ENCODE measurements at regions of chr4 and their contacts with region 1.

Region 1: GRCh38 chr4:16916719-16917337 is 18.4 kb upstream of the LDB2 start:
- DNase-seq: peak; percentile 87
- ATAC-seq: peak; percentile 92
- H3K4me3 Mint-ChIP-seq: no peak overlapping the region
- H3K27ac Mint-ChIP-seq: no peak overlapping the region
- H3K4me1 Mint-ChIP-seq: peaks cover 8% of the 10 kb centered on the region
- H3K27me3 Mint-ChIP-seq: no peaks in the 10 kb centered on the region

Region 2: DNA sequence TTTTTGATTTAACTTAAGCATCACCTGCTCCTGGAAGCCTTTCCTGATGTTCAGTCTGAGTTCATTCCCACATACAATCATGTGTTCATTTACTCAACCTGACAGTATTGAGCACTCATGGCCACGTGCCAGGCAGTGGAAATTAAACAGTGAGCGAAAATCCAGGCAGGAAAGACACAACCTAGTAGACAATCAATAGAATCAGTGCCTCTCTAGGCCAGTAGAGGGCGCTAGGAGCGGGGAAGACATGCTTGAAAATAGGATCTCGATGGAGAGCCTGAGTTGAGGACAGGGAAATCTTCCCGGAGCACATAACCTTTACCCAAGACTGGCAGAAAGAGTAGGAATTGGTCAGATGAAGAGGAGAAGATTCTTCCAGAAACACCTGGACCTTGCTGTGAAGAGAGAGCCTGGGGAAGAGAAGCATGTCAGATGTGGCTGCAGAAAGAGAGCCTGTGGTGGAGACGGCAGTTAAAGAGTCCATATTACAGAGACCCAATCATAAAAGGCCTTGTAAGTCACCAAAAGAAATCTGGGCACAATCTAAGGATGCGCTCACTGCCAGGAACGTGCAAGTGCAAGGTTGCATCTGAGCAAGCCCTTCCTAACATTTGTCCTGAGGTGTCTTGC is 121.9 kb before region 1 on chr4:
- CTCF ChIA-PET with region 1: interaction called, 38 read pairs
- POLR2A ChIA-PET with region 1: no interaction called
- DNase-seq: peak; percentile 62
- ATAC-seq: no peak
- H3K4me3 Mint-ChIP-seq: no peak overlapping the region
- H3K27ac Mint-ChIP-seq: no peak overlapping the region
- H3K4me1 Mint-ChIP-seq: no peaks in the 10 kb centered on the region
- H3K27me3 Mint-ChIP-seq: peaks cover 3% of the 10 kb centered on the region

Region 3: DNA sequence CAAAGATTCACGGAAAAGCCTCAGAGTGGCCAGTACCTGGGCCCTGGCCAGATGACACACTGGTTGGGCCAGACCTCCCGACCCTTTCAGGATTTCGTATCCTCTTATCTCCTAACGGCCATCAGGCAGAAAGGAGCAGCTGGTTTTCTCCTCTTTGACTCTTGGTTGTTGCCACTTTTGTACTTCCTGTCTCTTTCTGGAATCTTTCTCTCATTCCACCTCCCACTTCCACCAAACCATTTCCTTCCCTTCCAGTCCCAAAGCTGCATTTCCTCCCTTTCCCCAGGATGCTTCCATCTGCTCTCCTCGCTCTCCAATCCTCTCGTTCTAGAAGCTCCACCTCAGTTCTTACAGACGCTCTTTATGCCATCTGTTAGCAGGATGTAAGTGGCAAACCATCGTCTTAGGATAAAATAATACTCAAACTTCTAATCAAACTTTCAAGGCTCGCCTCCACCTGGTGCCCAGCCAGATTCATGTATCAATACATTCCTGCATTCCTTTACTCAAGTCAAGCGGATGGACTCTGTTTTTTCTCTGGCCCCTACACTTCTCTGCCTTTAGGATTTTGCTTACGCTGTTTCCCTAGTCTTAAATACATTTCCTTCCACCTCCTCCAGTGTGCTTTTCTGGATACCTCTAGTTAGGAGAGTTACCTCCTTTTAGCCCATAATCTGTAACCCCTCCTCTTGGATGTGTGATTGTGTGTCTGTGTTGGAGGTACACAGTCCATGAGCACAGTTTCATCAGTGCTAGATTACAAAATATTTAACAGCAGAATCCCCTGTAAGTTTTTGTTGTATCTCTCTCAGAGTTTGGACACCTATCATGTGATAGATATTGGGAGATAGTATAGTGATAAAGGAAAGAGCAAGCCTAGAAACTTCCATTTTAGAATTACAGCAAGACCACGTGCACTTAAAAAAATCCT is 88.8 kb before region 1 on chr4:
- CTCF ChIA-PET with region 1: no interaction called
- POLR2A ChIA-PET with region 1: no interaction called
- DNase-seq: no peak
- ATAC-seq: no peak
- H3K4me3 Mint-ChIP-seq: no peak overlapping the region
- H3K27ac Mint-ChIP-seq: no peak overlapping the region
- H3K4me1 Mint-ChIP-seq: no peaks in the 10 kb centered on the region
- H3K27me3 Mint-ChIP-seq: no peaks in the 10 kb centered on the region

Region 4: GRCh38 chr4:16884673-16885460 is 32.0 kb before region 1 on chr4:
- CTCF ChIA-PET with region 1: interaction called, 31 read pairs
- POLR2A ChIA-PET with region 1: no interaction called
- DNase-seq: peak; percentile 30
- ATAC-seq: no peak
- H3K4me3 Mint-ChIP-seq: no peak overlapping the region
- H3K27ac Mint-ChIP-seq: no peak overlapping the region
- H3K4me1 Mint-ChIP-seq: peaks cover 20% of the 10 kb centered on the region
- H3K27me3 Mint-ChIP-seq: no peaks in the 10 kb centered on the region

Region 5: GRCh38 chr4:16893141-16893651 is 23.6 kb before region 1 on chr4:
- CTCF ChIA-PET with region 1: interaction called, 31 read pairs
- POLR2A ChIA-PET with region 1: no interaction called
- DNase-seq: no peak
- ATAC-seq: no peak
- H3K4me3 Mint-ChIP-seq: peak overlapping the region; percentile 23
- H3K27ac Mint-ChIP-seq: peak overlapping the region; percentile 11
- H3K4me1 Mint-ChIP-seq: peaks cover 52% of the 10 kb centered on the region
- H3K27me3 Mint-ChIP-seq: peaks cover 14% of the 10 kb centered on the region

Region 6: GRCh38 chr4:16897991-16898827 is 18.6 kb before region 1 on chr4 and contains the start of gene LDB2:
- CTCF ChIA-PET with region 1: interaction called, 31 read pairs
- POLR2A ChIA-PET with region 1: no interaction called
- DNase-seq: no peak
- ATAC-seq: no peak
- H3K4me3 Mint-ChIP-seq: peak within 1 kb of the TSS; percentile 24
- H3K27ac Mint-ChIP-seq: no peak within 1 kb of the TSS
- H3K4me1 Mint-ChIP-seq: peaks cover 23% of the 10 kb centered on the region
- H3K27me3 Mint-ChIP-seq: peaks cover 24% of the 10 kb centered on the region
- total RNA-seq, gene LDB2: not detected

Region 7: DNA sequence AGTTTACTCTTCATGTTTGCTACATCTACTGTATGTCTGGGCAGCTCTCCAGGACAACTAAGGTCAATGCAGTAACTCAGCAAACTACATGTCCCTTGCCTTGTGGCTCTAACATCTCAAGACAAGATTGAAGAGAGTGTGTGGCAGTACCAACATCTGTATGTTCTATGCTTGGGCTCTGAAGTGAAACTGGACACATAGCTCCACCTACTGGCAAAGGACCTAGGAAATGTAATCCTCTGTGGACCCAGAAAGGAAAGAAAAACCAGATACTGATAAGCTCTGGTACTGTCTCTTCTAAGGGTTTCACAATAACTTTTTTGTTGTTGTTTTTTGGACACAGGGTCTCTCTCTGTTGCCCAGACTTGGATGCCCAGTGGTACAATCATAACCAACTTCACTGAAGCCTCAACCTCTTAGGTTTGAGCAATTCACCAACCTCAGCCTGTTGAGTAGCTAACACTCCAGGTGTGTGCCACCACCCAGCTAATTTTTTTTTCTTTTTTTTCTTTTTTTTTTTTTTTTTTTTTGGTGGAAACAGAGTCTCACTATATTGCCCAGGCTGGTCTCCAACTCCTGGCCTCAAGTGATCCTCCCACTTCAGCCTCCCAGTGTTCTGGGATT is 531.0 kb after region 1 on chr4:
- CTCF ChIA-PET with region 1: interaction called, 19 read pairs
- POLR2A ChIA-PET with region 1: no interaction called
- DNase-seq: peak; percentile 79
- ATAC-seq: peak; percentile 98
- H3K4me3 Mint-ChIP-seq: no peak overlapping the region
- H3K27ac Mint-ChIP-seq: no peak overlapping the region
- H3K4me1 Mint-ChIP-seq: peaks cover 5% of the 10 kb centered on the region
- H3K27me3 Mint-ChIP-seq: no peaks in the 10 kb centered on the region

Region 8: DNA sequence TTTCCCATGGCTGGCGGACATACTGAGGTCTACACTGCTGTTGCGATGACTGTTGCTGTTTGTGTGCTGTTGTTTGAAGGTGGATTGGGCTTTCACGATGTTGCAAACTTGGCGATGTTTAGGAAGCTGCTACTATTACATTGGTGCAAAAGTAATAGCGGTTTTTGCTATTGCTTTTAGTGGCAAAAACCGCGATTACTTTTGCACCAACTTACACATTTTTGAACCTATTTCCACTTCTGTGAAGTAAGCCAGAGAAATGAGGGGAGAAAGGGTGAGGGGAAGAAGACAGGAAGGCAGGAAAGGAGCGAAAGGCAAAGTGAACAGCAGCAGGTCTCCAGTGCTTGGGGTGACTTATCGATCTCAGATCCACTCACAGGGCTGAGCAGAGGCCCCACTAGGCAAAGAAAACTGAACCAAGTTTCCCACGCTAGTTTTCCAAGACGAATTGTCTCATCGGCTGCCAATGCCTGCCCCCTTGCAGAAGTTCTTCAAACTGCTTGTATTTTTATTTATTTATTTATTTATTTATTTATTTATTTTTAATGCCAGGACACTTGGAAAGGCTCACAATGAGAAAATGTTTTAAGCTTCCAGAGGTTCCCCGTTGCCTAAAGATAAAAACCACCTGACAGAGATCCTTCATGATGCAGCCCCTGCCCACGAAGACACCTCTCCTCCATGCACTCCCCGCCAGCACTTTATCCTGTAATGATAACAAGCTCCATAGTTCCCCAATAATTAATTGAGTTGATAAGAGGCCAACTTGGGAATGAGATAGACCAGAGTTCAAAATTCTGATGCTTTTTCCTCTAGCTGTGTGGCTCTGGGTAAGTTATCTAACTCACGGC is 551.8 kb after region 1 on chr4:
- CTCF ChIA-PET with region 1: interaction called, 10 read pairs
- POLR2A ChIA-PET with region 1: no interaction called
- DNase-seq: no peak
- ATAC-seq: no peak
- H3K4me3 Mint-ChIP-seq: no peak overlapping the region
- H3K27ac Mint-ChIP-seq: no peak overlapping the region
- H3K4me1 Mint-ChIP-seq: no peaks in the 10 kb centered on the region
- H3K27me3 Mint-ChIP-seq: no peaks in the 10 kb centered on the region

Region 9: GRCh38 chr4:17490575-17491059 is 573.8 kb after region 1 on chr4:
- CTCF ChIA-PET with region 1: no interaction called
- POLR2A ChIA-PET with region 1: no interaction called
- DNase-seq: no peak
- ATAC-seq: no peak
- H3K4me3 Mint-ChIP-seq: no peak overlapping the region
- H3K27ac Mint-ChIP-seq: peak overlapping the region; percentile 11
- H3K4me1 Mint-ChIP-seq: peaks cover 14% of the 10 kb centered on the region
- H3K27me3 Mint-ChIP-seq: no peaks in the 10 kb centered on the region

Measured in activated CD8-positive, alpha-beta T cell treated with anti-CD3 and anti-CD28 coated beads, Interleukin-2, amount 10 ng/mL, durations not matched to agents 7 days and 5 days (primary cell).